ENCODE measurements at regions of chr20 and their contacts with region 1.

Region 1: GRCh38 chr20:57089691-57090150 is 176.7 kb downstream of the BMP7 start:
- DNase-seq: peak; percentile 79
- ATAC-seq: peak; percentile 89

Region 2: GRCh38 chr20:57250607-57251343 is 161.1 kb after region 1 on chr20:
- intact Hi-C with region 1: loop called (anchors 10 kb)
- DNase-seq: no peak
- ATAC-seq: peak; percentile 15

Region 3: DNA sequence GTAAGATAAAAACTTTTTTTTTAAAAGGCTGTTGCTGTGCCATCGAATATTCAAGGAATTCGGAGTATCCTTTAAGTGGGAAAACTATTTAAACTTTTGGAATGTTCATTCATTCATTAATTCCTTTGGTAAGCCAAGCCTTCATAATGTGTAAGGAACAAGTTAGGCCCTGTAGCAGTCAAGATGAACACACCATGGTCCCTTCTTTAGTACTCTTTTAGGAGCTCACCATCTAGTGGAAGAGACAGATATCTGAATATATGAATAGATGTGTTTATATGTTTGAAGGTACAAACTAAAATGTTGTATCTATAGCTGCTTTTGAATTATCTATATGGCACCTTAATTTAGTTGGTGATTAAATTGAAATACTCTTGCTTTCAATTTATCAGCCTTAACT is 245.7 kb after region 1 on chr20:
- intact Hi-C with region 1: loop called (anchors 5 kb)
- DNase-seq: no peak
- ATAC-seq: no peak

Region 4: DNA sequence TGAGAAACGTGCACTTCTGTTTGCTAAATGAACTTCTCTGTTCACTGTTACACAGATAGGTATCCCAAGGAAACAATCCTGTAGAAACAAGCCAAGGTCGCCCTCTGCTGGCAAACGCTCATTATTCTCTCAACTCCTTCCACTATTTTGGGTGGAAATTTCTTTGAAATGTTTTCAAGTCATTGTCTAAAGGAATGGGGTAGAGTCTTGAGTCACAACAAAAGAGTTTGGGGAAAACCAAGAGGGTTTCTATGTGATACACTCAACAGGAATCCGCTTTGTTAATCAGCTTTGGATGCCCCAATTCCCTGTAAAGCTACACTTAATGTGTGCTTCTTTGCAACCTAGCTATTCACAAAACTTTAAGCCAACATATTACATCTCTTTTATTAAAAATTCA is 256.8 kb after region 1 on chr20:
- intact Hi-C with region 1: loop called (anchors 2 kb)
- DNase-seq: peak; percentile 74
- ATAC-seq: peak; percentile 65